ENCODE measurements at regions of chr12 and their contacts with region 1.

Region 1: DNA sequence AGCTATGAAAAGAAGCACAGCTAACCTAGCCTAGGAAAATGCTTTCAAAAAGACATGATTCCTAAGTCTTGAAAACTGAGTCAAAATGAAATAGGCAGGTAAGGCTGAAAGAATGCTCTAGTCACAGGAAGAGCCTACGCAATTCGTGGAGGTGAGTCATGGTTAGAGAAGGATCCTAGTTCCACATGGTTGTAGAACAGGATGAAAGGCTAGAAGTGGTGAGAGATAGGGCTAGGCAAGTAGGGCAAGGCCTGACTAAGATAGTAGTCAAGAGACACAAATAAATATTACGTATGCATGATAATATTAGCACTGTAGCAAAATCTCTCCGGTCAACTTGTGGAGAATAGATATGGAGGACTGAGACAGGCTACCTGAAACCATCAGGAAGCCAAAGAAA is 47.2 kb downstream of the PLCZ1 start:
- DNase-seq: peak; percentile 55 to 68
- H3K4me3 ChIP-seq: no peak overlapping the region
- H3K27ac ChIP-seq: peak overlapping the region; percentile 59
- H3K4me1 ChIP-seq: peaks cover 15% of the 10 kb centered on the region
- H3K27me3 ChIP-seq: no peaks in the 10 kb centered on the region
- CTCF ChIP-seq: no peak

Region 2: DNA sequence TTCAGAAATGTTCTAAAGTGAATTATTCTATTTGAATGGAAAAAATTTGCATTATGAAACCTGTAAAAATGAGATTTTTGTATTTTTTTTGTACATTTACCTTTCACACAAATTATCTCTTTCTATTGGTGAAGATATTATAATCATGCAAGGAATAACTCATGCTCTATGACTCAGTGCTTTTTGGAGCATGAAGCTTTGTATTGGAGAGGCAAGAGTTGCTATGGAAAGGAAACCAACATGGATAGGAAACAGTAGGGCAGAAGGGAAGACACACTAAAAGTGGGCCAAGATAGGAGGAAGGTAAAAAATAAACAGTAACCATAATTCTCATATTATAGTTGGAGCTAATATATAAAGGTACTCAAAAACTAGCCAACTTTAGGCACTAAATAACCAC is 31.8 kb before region 1 on chr12:
- CTCF ChIA-PET with region 1: no interaction called
- POLR2A ChIA-PET with region 1: no interaction called
- intact Hi-C with region 1: no loop called
- DNase-seq: no peak
- H3K4me3 ChIP-seq: no peak overlapping the region
- H3K27ac ChIP-seq: no peak overlapping the region
- H3K4me1 ChIP-seq: no peaks in the 10 kb centered on the region
- H3K27me3 ChIP-seq: no peaks in the 10 kb centered on the region
- CTCF ChIP-seq: no peak

Region 3: GRCh38 chr12:18723756-18724155 is 33.1 kb after region 1 on chr12:
- CTCF ChIA-PET with region 1: no interaction called
- POLR2A ChIA-PET with region 1: no interaction called
- intact Hi-C with region 1: loop called (anchors 1 kb)
- DNase-seq: peak; percentile 39 to 74
- H3K4me3 ChIP-seq: no peak overlapping the region
- H3K27ac ChIP-seq: no peak overlapping the region
- H3K4me1 ChIP-seq: peaks cover 4% of the 10 kb centered on the region; the same call in 1 of the 2 replicates
- H3K27me3 ChIP-seq: no peaks in the 10 kb centered on the region
- CTCF ChIP-seq: no peak